ENCODE measurements at regions of chr3 and their contacts with region 1.

Region 1: GRCh38 chr3:120182724-120183524 is 88.7 kb upstream of the GSK3B start:
- DNase-seq: peak; percentile 40
- H3K4me3 Mint-ChIP-seq: no peak overlapping the region
- H3K27ac Mint-ChIP-seq: no peak overlapping the region
- H3K4me1 Mint-ChIP-seq: peaks cover 25% of the 10 kb centered on the region
- H3K27me3 Mint-ChIP-seq: no peaks in the 10 kb centered on the region
- CTCF ChIP-seq: no peak

Region 2: DNA sequence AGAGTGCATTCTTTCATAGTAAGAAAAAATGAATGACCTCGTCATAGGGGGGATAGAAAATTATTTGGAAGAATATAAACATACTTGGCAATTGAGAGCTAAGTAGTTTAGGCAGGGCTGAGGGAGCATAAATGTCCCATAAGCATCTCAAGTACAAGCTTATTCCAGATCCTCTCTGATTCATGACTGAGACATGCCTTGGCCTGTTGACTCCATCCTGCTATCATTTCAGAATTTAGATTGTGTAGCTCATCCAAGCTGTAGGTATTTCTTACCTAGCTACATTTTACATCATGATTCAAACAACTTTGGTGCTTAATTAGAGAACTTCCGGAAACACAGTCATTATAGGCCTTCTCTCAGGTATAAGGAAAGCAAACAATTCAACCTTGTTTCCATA is 701.8 kb before region 1 on chr3:
- CTCF ChIA-PET with region 1: no interaction called
- intact Hi-C with region 1: no loop called
- DNase-seq: no peak
- H3K4me3 Mint-ChIP-seq: no peak overlapping the region
- H3K27ac Mint-ChIP-seq: no peak overlapping the region
- H3K4me1 Mint-ChIP-seq: no peaks in the 10 kb centered on the region
- H3K27me3 Mint-ChIP-seq: no peaks in the 10 kb centered on the region
- CTCF ChIP-seq: no peak

Region 3: DNA sequence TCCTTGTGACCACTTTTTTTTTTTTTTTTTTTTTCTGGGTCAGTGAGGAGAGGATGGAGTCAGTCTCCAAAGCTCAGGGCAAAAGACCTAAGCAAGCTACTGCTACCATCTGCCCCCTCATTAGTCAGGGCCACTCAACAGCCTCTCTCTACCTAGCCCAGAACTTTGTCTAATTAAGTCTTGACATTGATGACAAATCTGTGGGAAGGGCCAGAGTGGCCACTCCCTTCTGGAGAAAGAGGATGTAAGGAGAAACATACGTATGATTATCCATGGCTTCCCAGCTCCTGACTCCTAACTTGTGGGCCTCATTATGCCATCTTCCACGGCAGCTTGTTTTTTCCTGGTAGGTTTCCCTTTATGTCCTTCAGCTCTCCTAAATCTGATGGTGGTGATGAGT is 363.1 kb before region 1 on chr3:
- CTCF ChIA-PET with region 1: no interaction called
- intact Hi-C with region 1: loop called (anchors 5 kb)
- DNase-seq: no peak
- H3K4me3 Mint-ChIP-seq: no peak overlapping the region
- H3K27ac Mint-ChIP-seq: no peak overlapping the region
- H3K4me1 Mint-ChIP-seq: no peaks in the 10 kb centered on the region
- H3K27me3 Mint-ChIP-seq: no peaks in the 10 kb centered on the region
- CTCF ChIP-seq: no peak

Region 4: DNA sequence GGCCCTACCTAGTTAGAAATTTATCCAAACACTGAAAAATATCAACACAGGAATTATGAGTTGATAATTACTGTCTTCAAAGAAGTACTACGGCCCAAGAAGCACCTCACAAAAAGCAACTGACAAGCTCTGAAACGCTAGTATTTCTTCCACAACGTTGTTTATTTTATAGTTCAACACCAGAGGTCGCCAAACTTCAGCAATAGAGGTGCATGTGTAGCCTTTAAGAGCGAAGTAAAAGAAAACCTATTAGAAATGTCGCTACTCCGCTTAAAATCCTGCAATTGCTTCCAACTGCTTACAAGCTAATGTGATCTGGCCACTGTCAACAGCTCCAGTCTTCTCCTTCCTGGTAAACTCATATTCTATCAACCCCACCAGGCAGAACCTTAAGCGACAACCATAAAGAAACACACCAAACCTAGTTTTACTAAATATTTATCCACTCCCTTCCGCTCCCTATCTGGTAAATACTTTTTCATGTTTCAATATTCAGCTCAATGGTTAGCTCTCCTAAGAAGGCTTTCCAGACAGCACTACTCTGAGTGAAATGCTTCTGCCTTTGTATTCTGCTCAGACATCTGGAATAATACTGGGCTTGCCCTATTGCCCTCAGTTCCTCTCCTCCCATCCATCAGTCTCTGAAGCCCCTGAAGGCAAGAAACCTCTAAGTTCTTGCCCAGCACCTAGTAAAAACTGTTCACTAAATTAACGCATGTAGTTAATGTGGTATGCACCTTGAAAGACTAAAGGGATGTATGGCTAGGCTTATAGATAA is 290.8 kb before region 1 on chr3:
- CTCF ChIA-PET with region 1: interaction called, 5 read pairs
- intact Hi-C with region 1: loop called (anchors 1 kb)
- DNase-seq: peak; percentile 60
- H3K4me3 Mint-ChIP-seq: no peak overlapping the region
- H3K27ac Mint-ChIP-seq: no peak overlapping the region
- H3K4me1 Mint-ChIP-seq: peaks cover 17% of the 10 kb centered on the region
- H3K27me3 Mint-ChIP-seq: no peaks in the 10 kb centered on the region
- CTCF ChIP-seq: peak; percentile 31

Region 5: GRCh38 chr3:120673116-120673515 is 490.2 kb after region 1 on chr3:
- CTCF ChIA-PET with region 1: no interaction called
- intact Hi-C with region 1: no loop called
- DNase-seq: no peak
- H3K4me3 Mint-ChIP-seq: no peak overlapping the region
- H3K27ac Mint-ChIP-seq: no peak overlapping the region
- H3K4me1 Mint-ChIP-seq: peaks cover 8% of the 10 kb centered on the region
- H3K27me3 Mint-ChIP-seq: no peaks in the 10 kb centered on the region
- CTCF ChIP-seq: no peak